ENCODE measurements at regions of chr10 and their contacts with region 1.

Region 1: GRCh38 chr10:6542999-6543430 is 37.1 kb downstream of the PRKCQ start:
- DNase-seq: peak; percentile 65
- H3K4me3 Mint-ChIP-seq: peak overlapping the region; percentile 90
- H3K27ac Mint-ChIP-seq: peak overlapping the region; percentile 99
- H3K4me1 Mint-ChIP-seq: peaks cover 73% of the 10 kb centered on the region
- H3K27me3 Mint-ChIP-seq: no peaks in the 10 kb centered on the region

Region 2: DNA sequence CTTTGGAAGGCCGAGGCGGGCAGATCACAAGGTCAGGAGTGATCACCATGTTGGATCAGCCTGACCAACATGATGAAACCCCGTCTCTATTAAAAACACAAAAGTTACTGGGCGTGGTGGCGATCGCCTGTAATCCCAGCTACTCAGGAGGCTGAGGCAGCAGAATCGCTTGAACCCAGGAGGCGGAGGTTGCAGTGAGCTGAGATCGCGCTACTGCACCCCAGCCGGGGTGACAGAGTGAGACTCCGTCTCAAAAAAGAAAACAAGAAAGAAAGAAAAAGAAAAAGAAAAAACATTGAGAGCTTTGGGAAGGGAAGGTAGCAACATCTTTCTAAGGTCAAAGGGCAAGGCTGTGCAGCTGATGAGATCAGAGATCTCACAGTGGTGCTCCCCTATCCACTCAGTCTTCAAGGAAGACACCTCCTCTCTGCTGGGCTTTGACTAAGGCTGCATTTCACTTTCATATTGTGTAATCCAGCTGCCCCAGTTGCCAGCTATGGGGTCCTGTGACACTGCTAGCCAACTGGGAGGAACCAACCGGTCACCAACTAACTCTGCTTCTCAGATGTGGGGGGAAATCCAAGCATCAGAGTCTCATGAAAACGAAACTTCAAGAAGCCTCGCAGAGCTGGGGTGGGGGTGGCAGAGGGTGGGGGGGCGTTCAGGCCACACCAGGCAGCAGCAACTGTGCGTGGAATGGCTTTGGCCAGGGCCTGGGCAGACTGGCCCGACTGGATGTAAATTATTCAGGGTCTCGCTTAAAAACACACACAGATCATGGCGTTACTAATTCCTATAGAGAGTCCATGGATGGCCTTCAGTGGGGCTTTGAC is 567.2 kb before region 1 on chr10:
- CTCF ChIA-PET with region 1: no interaction called
- POLR2A ChIA-PET with region 1: no interaction called
- intact Hi-C with region 1: no loop called
- DNase-seq: peak; percentile 85
- H3K4me3 Mint-ChIP-seq: peak overlapping the region; percentile 91
- H3K27ac Mint-ChIP-seq: peak overlapping the region; percentile 93
- H3K4me1 Mint-ChIP-seq: peaks cover 44% of the 10 kb centered on the region
- H3K27me3 Mint-ChIP-seq: no peaks in the 10 kb centered on the region

Region 3: DNA sequence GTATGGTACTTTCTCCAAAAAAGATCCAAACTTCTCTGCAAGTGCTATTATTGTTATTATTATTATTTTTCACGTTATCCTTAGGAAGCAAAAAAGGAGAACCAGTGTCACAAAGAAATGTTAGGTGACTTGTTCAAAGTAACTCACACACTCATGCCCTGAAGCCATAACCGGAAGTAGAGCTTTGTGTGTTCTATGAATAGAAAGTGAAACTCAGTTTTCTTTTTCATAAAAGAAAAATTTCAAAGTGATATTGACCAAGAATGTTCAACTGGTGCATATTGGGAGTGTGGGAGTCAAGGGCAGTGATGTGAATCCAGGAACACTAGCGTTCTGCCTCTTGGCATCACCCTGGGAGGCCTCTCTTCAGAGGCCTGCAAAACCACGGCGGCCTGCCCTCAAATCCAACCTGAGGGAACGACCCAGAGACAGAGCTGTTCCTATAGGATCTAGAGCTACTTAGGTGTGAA is 69.1 kb before region 1 on chr10:
- CTCF ChIA-PET with region 1: interaction called, 9 read pairs
- POLR2A ChIA-PET with region 1: interaction called, 5 read pairs
- intact Hi-C with region 1: loop called (anchors 1 kb)
- DNase-seq: peak; percentile 54
- H3K4me3 Mint-ChIP-seq: peak overlapping the region; percentile 73
- H3K27ac Mint-ChIP-seq: peak overlapping the region; percentile 93
- H3K4me1 Mint-ChIP-seq: peaks cover 48% of the 10 kb centered on the region
- H3K27me3 Mint-ChIP-seq: no peaks in the 10 kb centered on the region

Region 4: GRCh38 chr10:6514844-6515780 is 27.9 kb before region 1 on chr10:
- CTCF ChIA-PET with region 1: no interaction called
- POLR2A ChIA-PET with region 1: no interaction called
- intact Hi-C with region 1: loop called (anchors 1 kb)
- DNase-seq: no peak
- H3K4me3 Mint-ChIP-seq: no peak overlapping the region
- H3K27ac Mint-ChIP-seq: peak overlapping the region; percentile 14
- H3K4me1 Mint-ChIP-seq: peaks cover 85% of the 10 kb centered on the region
- H3K27me3 Mint-ChIP-seq: no peaks in the 10 kb centered on the region

Region 5: DNA sequence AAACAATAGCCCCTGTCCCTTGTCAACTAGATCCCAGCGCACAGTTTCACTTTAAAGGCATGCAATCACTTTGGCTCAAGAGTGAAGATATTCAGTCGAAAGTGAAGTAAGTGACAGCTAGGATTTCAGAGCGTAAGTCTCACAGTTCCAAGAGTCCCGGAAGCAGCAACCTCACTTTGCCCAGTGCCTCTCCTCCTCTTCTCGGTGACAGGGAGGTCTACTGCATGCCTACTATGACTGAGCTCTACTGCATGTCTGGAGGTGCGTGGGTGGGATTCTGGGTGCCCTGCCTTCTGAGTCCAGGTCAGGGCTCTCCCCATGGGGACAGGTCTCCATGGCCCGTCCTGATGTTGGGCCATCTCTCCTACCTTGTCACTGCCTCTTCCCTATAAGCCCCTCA is 20.1 kb after region 1 on chr10:
- CTCF ChIA-PET with region 1: interaction called, 9 read pairs
- POLR2A ChIA-PET with region 1: interaction called, 8 read pairs
- intact Hi-C with region 1: loop called (anchors 1 kb)
- DNase-seq: peak; percentile 86
- H3K4me3 Mint-ChIP-seq: peak overlapping the region; percentile 72
- H3K27ac Mint-ChIP-seq: peak overlapping the region; percentile 91
- H3K4me1 Mint-ChIP-seq: peaks cover 88% of the 10 kb centered on the region
- H3K27me3 Mint-ChIP-seq: no peaks in the 10 kb centered on the region